ENCODE measurements at regions of chr10 and their contacts with region 1.

Region 1: GRCh38 chr10:7525314-7526016 is 114.6 kb upstream of the SFMBT2 start:
- ATAC-seq: peak; percentile 85 to 96 (median 92)
- H3K4me3 ChIP-seq: no peak overlapping the region
- H3K27ac ChIP-seq: no peak overlapping the region
- H3K4me1 ChIP-seq: no peaks in the 10 kb centered on the region

Region 2: DNA sequence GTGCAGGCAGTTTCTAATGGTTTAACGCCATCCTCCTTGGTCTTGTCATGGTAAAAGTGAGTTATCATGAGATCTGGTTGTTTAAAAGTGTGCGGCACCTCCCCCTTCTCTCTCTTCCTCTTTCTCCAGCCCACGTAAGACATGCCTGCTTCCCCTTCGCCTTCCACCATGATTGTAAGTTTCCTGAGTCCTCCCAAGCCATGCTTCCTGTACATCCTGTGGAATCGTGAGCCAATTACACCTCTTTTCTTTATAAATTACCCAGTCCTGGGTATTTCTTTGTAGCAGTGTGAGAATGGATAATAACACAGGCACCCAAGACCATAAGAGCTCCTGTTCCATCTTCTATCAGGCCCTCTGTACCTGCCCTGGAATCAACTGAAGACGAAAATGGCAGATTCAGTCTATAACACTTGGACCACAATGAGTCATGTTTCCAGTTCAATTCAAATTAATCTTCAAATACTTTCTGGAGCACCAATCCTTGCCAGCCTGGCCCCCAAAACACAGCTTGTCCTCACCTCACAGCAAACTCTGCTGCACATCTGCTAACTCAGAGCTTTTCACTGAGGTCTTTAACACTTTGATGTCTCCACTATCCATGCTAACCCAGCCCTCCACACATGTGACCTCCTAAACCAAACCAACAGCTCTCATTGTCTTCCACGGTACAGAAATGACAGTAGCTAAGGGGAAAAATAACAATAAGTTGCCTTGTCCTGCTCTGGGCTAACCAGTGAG is 187.9 kb before region 1 on chr10:
- in situ Hi-C with region 1: no loop called
- ATAC-seq: no peak
- H3K4me3 ChIP-seq: no peak overlapping the region
- H3K27ac ChIP-seq: no peak overlapping the region
- H3K4me1 ChIP-seq: peaks cover 8 to 27% of the 10 kb centered on the region in 2 donors

Region 3: GRCh38 chr10:7687228-7687907 is 161.9 kb after region 1 on chr10:
- in situ Hi-C with region 1: loop called in 7 of 9 experiments (anchors 10 to 25 kb)
- ATAC-seq: peak; percentile 92 to 100 (median 97)
- H3K4me3 ChIP-seq: no peak overlapping the region
- H3K27ac ChIP-seq: no peak overlapping the region
- H3K4me1 ChIP-seq: peaks cover 3% of the 10 kb centered on the region in 2 donors

Region 4: GRCh38 chr10:7826971-7827370 is 301.5 kb after region 1 on chr10:
- in situ Hi-C with region 1: no loop called
- ATAC-seq: peak in 3 of 8 experiments; percentile 27 to 47 (median 32)
- H3K4me3 ChIP-seq: no peak overlapping the region
- H3K27ac ChIP-seq: no peak overlapping the region
- H3K4me1 ChIP-seq: no peaks in the 10 kb centered on the region